ENCODE measurements at regions of chr5 and their contacts with region 1.

Region 1: GRCh38 chr5:37370864-37371726 is at the start of gene NUP155:
- DNase-seq: peak; percentile 98
- ATAC-seq: peak; percentile 97
- H3K4me3 ChIP-seq: peak within 1 kb of the TSS; percentile 86 to 100
- H3K27ac ChIP-seq: peak within 1 kb of the TSS; percentile 95
- H3K4me1 ChIP-seq: peaks cover 12% of the 10 kb centered on the region; the same call in 1 of the 2 replicates
- H3K27me3 ChIP-seq: no peaks in the 10 kb centered on the region
- CTCF ChIP-seq: no peak
- total RNA-seq, gene NUP155: 58.5 TPM

Region 2: GRCh38 chr5:37519304-37519703 is 148.2 kb after region 1 on chr5:
- CTCF ChIA-PET with region 1: no interaction called
- POLR2A ChIA-PET with region 1: interaction called, 14 read pairs
- in situ Hi-C with region 1: no loop called
- intact Hi-C with region 1: no loop called
- DNase-seq: no peak
- ATAC-seq: no peak
- H3K4me3 ChIP-seq: no peak overlapping the region
- H3K27ac ChIP-seq: no peak overlapping the region
- H3K4me1 ChIP-seq: no peaks in the 10 kb centered on the region
- H3K27me3 ChIP-seq: no peaks in the 10 kb centered on the region
- CTCF ChIP-seq: no peak

Measured in Panc1 (cell line).